Adrenal gland (tissue), 19 donors: ENCODE measurements at regions of chr20 and their contacts with region 1.

Region 1: GRCh38 chr20:54643791-54644190 is 168.4 kb downstream of the DOK5 start:
- DNase-seq: peak in 3 of 7 donors; percentile 15 to 36 (median 34)
- H3K4me3 ChIP-seq: no peak overlapping the region
- H3K27ac ChIP-seq: no peak overlapping the region
- H3K4me1 ChIP-seq: no peaks in the 10 kb centered on the region
- H3K27me3 ChIP-seq: no peaks in the 10 kb centered on the region
- CTCF ChIP-seq: no peak
- POLR2A ChIP-seq: no peak

Region 2: GRCh38 chr20:54219751-54220426 is 423.9 kb before region 1 on chr20:
- intact Hi-C with region 1: loop called (anchors 5 kb)
- DNase-seq: no peak
- H3K4me3 ChIP-seq: no peak overlapping the region
- H3K27ac ChIP-seq: no peak overlapping the region
- H3K4me1 ChIP-seq: peaks cover 9 to 16% of the 10 kb centered on the region in 2 donors
- H3K27me3 ChIP-seq: no peaks in the 10 kb centered on the region
- CTCF ChIP-seq: peak; percentile 13 to 67 (median 56)
- POLR2A ChIP-seq: no peak

Region 3: GRCh38 chr20:54485631-54486030 is 158.2 kb before region 1 on chr20:
- intact Hi-C with region 1: no loop called
- DNase-seq: no peak
- H3K4me3 ChIP-seq: no peak overlapping the region
- H3K27ac ChIP-seq: no peak overlapping the region
- H3K4me1 ChIP-seq: no peaks in the 10 kb centered on the region
- H3K27me3 ChIP-seq: peaks cover under 1% of the 10 kb centered on the region
- CTCF ChIP-seq: no peak
- POLR2A ChIP-seq: no peak